Activated T-helper 1 cell treated with anti-CD3 and anti-CD28 coated beads, Interleukin-12 subunit alpha, Interleukin-12 subunit beta, Interleukin-2, Interleukin-4 antibody, amounts not matched to agents 30 ng/mL and 10 ng/mL and 1 ng/mL, durations not matched to agents 14 hours and 24 hours and 36 hours (primary cell): ENCODE measurements at regions of chr3 and their contacts with region 1.

Region 1: DNA sequence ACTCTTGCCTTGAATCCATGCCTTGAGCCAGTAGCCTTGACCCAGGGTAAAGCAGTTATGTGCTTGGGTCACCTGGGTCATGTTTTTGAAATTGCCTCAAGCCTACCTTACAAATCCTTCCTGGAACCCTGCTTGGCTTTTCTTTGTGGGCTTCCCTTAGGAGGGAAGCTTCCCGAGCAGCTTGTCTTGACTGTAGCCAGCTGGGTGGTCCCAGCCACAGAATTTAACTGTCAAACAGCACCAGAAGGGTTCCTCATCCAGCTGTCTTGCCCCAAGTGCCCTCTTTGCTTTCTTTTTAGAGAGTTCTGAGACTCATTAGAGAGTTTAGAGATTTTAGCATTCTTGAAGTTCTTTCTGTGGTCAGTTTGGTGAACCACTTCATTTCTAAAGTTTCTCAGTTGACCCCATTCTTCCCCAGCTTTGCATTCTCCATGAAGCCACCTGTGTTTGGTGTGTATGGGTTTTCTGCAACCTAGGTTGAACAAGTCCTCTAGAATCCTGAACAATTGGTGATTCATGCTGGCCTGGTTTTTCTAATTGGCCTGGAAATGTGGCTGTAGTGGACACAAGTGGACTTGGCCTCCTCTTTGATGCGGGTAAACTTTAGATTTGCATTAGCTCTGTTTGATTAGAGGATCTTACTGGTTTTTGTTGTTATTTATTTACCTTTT is 33.6 kb downstream of the FLNB start:
- DNase-seq: no peak
- H3K4me3 Mint-ChIP-seq: peak overlapping the region; percentile 26
- H3K27ac Mint-ChIP-seq: no peak overlapping the region
- H3K4me1 Mint-ChIP-seq: peaks cover 52% of the 10 kb centered on the region
- H3K27me3 Mint-ChIP-seq: peaks cover 6% of the 10 kb centered on the region

Region 2: GRCh38 chr3:57778494-57778893 is 263.3 kb before region 1 on chr3:
- intact Hi-C with region 1: no loop called
- DNase-seq: no peak
- H3K4me3 Mint-ChIP-seq: no peak overlapping the region
- H3K27ac Mint-ChIP-seq: no peak overlapping the region
- H3K4me1 Mint-ChIP-seq: peaks cover 13% of the 10 kb centered on the region
- H3K27me3 Mint-ChIP-seq: no peaks in the 10 kb centered on the region

Region 3: GRCh38 chr3:58073301-58074108 is 31.7 kb after region 1 on chr3:
- intact Hi-C with region 1: loop called (anchors 5 kb)
- DNase-seq: no peak
- H3K4me3 Mint-ChIP-seq: no peak overlapping the region
- H3K27ac Mint-ChIP-seq: peak overlapping the region; percentile 3
- H3K4me1 Mint-ChIP-seq: peaks cover 26% of the 10 kb centered on the region
- H3K27me3 Mint-ChIP-seq: no peaks in the 10 kb centered on the region